Calu3 (cell line): ENCODE measurements at regions of chr2 and their contacts with region 1.

Region 1: GRCh38 chr2:164504258-164504657 is 117.0 kb downstream of the GRB14 start:
- DNase-seq: peak; percentile 62
- H3K4me3 Mint-ChIP-seq: no peak overlapping the region
- H3K27ac Mint-ChIP-seq: peak overlapping the region; percentile 26
- H3K4me1 Mint-ChIP-seq: no peaks in the 10 kb centered on the region
- H3K27me3 Mint-ChIP-seq: no peaks in the 10 kb centered on the region
- CTCF ChIP-seq: peak; percentile 51

Region 2: GRCh38 chr2:164538240-164538866 is 34.1 kb after region 1 on chr2:
- CTCF ChIA-PET with region 1: interaction called, 9 read pairs
- intact Hi-C with region 1: loop called (anchors 1 kb)
- DNase-seq: peak; percentile 25
- H3K4me3 Mint-ChIP-seq: no peak overlapping the region
- H3K27ac Mint-ChIP-seq: no peak overlapping the region
- H3K4me1 Mint-ChIP-seq: peaks cover 32% of the 10 kb centered on the region
- H3K27me3 Mint-ChIP-seq: no peaks in the 10 kb centered on the region
- CTCF ChIP-seq: peak; percentile 63